Spleen (tissue), 13 donors: ENCODE measurements at regions of chr10 and their contacts with region 1.

Region 1: DNA sequence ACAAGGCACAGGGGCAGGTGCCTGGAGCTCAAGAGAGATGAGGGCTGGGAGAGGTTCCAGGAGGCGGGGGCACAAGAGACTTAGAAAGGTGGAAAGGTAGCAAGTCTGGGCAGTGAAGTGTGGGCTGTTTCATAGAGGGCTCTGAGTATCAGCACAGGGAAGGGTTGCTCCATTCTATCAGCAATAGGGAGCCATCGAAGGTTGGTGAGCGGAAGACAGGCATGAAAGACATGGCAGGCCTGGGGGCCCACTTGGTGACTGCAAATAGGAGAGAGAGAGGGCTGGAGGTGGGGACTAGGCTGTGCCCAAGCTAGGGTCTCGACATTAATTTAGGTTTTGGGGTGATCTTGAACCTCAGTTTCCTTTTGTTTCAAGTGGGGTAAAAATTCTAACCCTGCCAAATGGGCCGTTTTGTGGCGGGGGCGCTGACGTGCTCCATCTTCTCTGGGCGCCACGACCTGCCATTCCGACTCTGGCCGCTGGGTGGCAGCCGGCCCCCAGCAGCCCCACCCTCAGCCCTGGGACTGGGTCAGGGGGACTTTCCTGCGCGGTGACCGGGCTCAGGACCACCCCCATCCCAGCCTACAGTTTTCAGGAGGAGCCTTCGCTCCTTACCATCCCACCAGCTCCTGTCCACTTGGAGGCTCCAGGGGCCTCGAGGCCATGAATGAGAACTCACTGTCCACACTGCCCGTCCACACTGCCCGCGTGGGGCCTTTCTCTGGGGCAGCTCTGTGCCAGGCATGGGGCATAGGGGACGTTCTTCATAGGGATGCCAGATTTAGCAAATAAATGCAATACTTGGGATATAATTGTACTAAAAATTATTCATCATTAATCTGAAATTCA is 37.2 kb upstream of the PCBD1 start:
- DNase-seq: peak; percentile 87
- H3K4me3 ChIP-seq: no peak overlapping the region
- H3K27ac ChIP-seq: no peak overlapping the region
- H3K4me1 ChIP-seq: peaks cover 0 to 7% (median 5%) of the 10 kb centered on the region in 6 donors
- H3K27me3 ChIP-seq: peaks cover 0 to 53% (median 0%) of the 10 kb centered on the region in 7 donors
- CTCF ChIP-seq: peak; percentile 60 to 97 (median 92)
- POLR2A ChIP-seq: no peak

Region 2: DNA sequence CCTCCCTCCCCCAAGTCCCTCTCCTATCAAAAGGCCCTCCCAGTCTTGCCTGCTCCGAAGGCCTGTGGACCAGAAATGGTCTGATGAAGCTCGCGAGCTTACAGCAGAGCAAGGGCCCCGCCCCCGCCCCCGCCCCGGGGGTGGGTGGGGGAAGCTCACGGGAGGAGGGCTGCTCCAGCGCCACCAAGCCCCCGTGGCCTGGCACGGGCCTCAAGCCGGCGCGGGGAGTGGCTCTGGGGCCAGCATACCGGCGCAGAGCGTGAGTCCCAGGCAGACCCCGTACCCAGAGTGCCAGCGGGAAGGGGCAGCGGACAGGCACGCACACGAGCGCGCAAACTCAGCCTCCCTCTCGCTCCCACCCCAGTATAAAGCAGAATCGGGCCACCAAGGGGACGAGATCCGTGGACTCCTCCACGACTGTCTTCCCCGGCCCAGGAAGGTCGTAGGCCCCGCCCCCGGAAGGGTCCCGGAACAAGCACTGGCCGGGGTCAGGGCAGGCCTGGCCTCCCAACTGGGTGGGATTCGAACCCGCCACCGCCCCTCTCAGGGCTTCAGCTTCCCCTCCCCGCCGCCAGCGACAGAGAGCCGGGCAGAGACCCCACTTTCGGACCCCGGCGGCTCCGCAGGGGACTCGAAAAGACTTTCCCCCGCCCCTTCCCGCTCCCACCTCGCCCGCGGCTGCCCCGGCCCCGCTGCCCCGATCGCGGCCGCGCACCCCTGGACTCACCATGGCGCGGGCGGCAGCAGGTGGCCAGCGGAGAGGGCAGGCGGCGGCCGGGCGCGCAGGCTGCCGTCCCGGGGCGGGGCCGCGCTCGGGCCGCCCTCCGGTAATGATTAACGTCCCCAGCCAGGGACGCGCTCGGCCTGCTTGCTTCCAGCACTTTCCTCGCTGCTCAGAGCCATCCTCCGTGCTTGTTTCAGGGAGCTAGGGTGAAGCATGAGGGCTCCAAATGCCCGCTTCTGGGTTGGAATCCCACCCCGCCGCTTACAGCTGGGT is 37.5 kb before region 1 on chr10 and contains the start of gene PCBD1:
- intact Hi-C with region 1: no loop called
- DNase-seq: peak; percentile 94
- H3K4me3 ChIP-seq: peak within 1 kb of the TSS; percentile 62 to 85 (median 76)
- H3K27ac ChIP-seq: peak within 1 kb of the TSS; percentile 79 to 92 (median 88)
- H3K4me1 ChIP-seq: peaks cover 9 to 32% (median 20%) of the 10 kb centered on the region in 6 donors
- H3K27me3 ChIP-seq: no peaks in the 10 kb centered on the region
- CTCF ChIP-seq: no peak
- POLR2A ChIP-seq: peak in 1 of 3 donors; percentile 56
- total RNA-seq, gene PCBD1: 24.5 to 36.1 (median 29.8) TPM

Region 3: DNA sequence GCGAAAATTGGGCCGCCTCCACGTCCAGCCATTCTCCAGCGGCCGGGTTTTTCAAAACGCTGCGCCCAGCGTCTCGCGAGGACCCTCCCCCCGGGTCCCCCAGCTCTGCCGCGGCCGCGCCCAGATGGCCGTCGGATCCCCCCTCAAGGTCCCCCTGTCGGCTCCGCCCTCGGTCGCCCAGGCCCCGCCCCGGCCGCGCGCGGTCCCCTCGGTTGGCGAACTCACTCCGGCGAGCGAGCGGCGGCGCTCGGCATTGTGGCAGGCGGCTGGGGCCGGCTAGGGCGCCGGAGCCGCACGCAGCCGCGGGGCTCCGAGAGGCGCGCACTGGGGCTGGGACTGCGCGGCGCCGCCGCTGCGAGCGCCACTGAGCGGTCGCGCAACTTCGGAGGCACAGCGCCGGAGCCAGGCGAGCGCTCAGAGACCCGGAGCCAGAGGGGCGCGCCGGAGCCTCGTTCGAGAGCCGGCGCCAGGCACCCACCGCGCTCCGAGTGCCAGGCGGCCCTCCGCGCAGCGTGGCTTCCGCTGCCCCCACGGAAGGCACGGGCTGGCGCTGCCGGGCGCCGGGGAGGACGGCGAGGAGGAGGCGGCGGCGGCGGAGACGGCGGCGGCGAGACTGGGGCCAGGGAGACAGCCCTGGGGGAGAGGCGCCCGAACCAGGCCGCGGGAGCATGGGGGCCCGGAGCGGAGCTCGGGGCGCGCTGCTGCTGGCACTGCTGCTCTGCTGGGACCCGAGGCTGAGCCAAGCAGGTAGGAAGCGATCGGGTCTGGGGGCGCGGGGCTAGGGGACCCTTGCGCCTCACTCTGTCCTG is 286.9 kb after region 1 on chr10 and contains the start of gene UNC5B:
- intact Hi-C with region 1: loop called (anchors 5 kb)
- DNase-seq: peak; percentile 91
- H3K4me3 ChIP-seq: peak within 1 kb of the TSS; percentile 42 to 80 (median 58)
- H3K27ac ChIP-seq: peak within 1 kb of the TSS in 7 of 8 donors; percentile 36 to 84 (median 76)
- H3K4me1 ChIP-seq: peaks cover 18 to 72% (median 46%) of the 10 kb centered on the region in 6 donors
- H3K27me3 ChIP-seq: peaks cover 3 to 96% (median 42%) of the 10 kb centered on the region in 7 donors
- CTCF ChIP-seq: peak in 2 of 11 experiments; percentile 27 to 28
- POLR2A ChIP-seq: peak in 1 of 3 donors; percentile 63
- total RNA-seq, gene UNC5B: 6.8 to 21.1 (median 15.4) TPM

Region 4: DNA sequence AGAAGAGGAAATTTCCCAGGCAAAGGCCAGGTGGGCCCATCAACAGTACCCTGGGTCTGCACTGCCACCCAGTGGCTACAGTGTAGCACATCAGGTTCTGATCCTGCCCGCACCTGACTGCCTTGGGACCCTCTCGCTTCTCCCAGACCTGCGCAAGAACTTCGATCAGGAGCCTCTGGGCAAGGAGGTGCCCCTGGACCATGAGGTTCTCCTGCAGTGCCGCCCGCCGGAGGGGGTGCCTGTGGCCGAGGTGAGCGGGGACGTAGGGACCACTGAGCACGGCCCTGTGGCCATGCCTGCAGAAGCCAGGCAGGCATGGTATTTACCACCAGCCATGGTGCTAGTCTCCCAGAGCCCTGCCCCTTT is 359.6 kb after region 1 on chr10:
- intact Hi-C with region 1: loop called (anchors 10 kb)
- DNase-seq: no peak
- H3K4me3 ChIP-seq: no peak overlapping the region
- H3K27ac ChIP-seq: no peak overlapping the region
- H3K4me1 ChIP-seq: peaks cover 0 to 29% (median 9%) of the 10 kb centered on the region in 6 donors
- H3K27me3 ChIP-seq: no peaks in the 10 kb centered on the region
- CTCF ChIP-seq: peak in 10 of 11 experiments; percentile 53 to 82 (median 69)
- POLR2A ChIP-seq: no peak